AG04449 (cell line): ENCODE measurements at regions of chr17 and their contacts with region 1.

Region 1: GRCh38 chr17:66727639-66728570 is 107.0 kb upstream of the CACNG5 start:
- DNase-seq: no peak
- H3K4me3 ChIP-seq: no peak overlapping the region
- CTCF ChIP-seq: peak; percentile 77

Region 2: DNA sequence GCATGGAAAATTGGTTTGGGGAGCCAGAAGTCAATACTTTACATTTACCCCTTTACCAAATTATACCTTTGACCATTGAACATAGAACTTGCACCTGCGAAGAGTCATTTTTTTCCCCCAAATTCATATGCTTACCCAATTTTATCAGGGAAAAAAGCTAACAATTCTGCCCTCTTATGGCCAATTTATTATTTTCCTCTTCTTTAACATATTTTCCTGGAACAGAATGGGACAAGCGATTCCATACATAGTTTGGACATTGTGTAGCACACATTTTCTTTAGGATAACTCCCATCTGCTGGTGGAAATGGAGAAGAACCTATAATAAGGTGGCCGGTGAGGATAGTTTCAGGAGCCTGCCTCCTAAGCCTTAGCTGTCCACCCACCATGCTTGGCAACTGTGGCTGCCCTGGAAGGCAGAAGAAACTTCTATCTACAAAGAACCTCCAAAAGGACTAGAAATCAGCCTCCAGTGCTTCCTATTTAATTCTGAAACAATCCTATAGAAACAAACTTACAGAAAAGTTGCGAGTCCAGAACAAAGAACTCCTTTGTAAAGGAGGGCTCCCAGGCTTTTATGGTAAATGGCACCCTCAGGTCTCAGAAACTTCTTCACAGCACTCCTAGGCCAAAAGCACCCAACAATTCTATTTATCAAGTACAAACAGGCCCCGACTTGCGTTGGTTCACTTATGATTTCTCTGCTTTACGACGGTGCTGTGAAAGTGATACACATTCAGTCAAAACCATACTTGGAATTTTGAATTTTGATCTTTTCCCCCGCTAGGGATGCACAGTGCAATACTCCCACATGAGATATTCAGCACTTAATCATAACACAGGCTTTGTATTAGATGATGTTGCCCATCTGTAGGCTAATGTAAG is 172.5 kb after region 1 on chr17:
- CTCF ChIA-PET with region 1: interaction called, 18 read pairs
- POLR2A ChIA-PET with region 1: no interaction called
- DNase-seq: no peak
- H3K4me3 ChIP-seq: no peak overlapping the region
- CTCF ChIP-seq: peak; percentile 19

Region 3: DNA sequence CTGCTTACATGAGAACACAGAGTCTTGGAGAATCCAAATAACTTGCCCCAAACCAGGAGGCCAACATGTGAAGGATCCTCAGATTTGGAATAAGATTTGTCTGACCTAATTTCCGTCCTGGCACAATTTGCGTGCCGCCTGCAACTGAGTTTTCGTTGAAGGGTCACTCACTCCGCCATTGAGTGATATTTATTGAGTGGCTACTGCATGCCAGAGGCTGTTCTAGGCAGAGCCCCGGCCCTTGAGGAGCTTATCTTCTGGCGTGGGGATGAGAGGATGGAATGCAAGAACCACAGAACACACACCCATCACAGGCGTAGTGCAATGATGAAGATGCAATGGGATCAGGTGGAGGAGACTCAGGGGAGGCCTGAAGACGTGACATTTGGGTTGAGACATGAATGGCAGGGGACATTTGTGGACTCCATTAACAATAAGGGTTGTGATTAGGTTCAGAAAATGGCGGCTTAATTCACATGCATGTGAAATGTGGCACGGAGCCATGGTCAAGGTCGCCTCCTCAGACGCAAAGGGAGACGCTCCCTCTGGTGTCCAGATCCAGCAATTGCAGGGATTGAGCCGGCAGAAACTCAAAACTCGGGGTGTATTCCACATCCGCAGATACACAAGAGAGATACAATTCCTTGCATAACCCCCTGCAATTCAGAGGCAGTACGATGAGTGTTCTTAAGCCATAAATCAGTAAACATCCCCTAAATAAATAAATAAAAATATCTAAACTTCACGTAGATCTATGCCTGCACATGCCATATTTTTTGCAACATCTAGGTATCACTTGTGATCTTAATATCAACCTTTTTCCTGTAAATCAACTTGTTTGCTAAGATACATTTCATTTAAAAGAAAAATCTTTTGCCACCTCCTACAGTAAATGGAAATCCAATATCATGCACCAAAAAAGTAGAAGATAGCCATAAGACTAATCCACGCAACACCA is 178.7 kb after region 1 on chr17:
- CTCF ChIA-PET with region 1: interaction called, 18 read pairs
- POLR2A ChIA-PET with region 1: no interaction called
- DNase-seq: no peak
- H3K4me3 ChIP-seq: no peak overlapping the region
- CTCF ChIP-seq: peak; percentile 88